HepG2 (cell line): ENCODE measurements at regions of chr2 and their contacts with region 1.

Region 1: GRCh38 chr2:28958689-28959088 is 22.4 kb upstream of the TOGARAM2 start:
- DNase-seq: peak; percentile 70
- ATAC-seq: peak; percentile 70
- H3K4me3 ChIP-seq: no peak overlapping the region
- H3K27ac ChIP-seq: no peak overlapping the region
- H3K4me1 ChIP-seq: peaks cover 18% of the 10 kb centered on the region
- H3K27me3 ChIP-seq: peaks cover 0 to 8% of the 10 kb centered on the region in 2 experiments; a peak in 2 of 5 replicates
- CTCF ChIP-seq: peak; percentile 83
- EP300 ChIP-seq: no peak
- POLR2A ChIP-seq: no peak
- RAD21 ChIP-seq: peak; percentile 89

Region 2: DNA sequence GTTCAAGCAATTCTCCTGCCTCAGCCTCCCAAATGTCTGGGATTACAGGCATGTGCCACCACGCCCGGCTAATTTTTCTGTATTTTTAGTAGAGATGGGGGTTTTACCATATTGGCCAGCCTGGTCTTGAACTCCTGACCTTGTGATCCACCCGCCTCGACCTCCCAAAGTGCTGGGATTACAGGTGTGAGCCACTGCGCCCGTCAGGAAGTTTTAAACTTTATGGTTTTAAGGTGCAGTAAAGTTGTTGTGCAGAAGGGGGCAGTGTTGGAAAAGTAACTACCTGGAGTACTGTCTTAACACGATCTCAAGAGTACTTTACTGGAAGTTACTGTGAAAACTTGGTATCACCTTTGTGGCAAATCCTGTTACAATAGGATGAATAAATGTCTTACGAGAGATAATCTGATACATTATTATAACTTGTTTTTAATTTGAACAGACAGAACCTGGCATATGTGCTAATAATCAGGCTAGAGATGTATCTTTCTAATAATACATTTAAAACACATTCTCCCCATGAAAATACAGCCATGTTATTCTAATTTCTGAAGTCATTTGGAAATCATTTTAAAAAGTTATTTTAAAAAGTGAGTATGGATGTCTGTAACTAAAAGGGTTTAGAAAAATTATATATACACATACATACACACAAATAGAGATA is 137.3 kb before region 1 on chr2:
- CTCF ChIA-PET with region 1: interaction called, 3 read pairs
- POLR2A ChIA-PET with region 1: no interaction called
- in situ Hi-C with region 1: no loop called
- intact Hi-C with region 1: loop called (anchors 1 kb)
- DNase-seq: peak; percentile 67
- ATAC-seq: peak; percentile 91
- H3K4me3 ChIP-seq: no peak overlapping the region
- H3K27ac ChIP-seq: no peak overlapping the region
- H3K4me1 ChIP-seq: no peaks in the 10 kb centered on the region; the same call in 1 of the 2 replicates
- H3K27me3 ChIP-seq: no peaks in the 10 kb centered on the region
- CTCF ChIP-seq: peak; percentile 90
- EP300 ChIP-seq: no peak
- POLR2A ChIP-seq: no peak
- RAD21 ChIP-seq: peak; percentile 62

Region 3: GRCh38 chr2:29108225-29108624 is 149.5 kb after region 1 on chr2:
- CTCF ChIA-PET with region 1: no interaction called
- POLR2A ChIA-PET with region 1: no interaction called
- in situ Hi-C with region 1: no loop called
- intact Hi-C with region 1: loop called (anchors 5 kb)
- DNase-seq: peak; percentile 84
- ATAC-seq: peak; percentile 97
- H3K4me3 ChIP-seq: peak overlapping the region in 2 of 3 experiments; percentile 5 to 11; a peak in 3 of 6 replicates
- H3K27ac ChIP-seq: no peak overlapping the region
- H3K4me1 ChIP-seq: peaks cover 30% of the 10 kb centered on the region
- H3K27me3 ChIP-seq: no peaks in the 10 kb centered on the region; a peak in 1 of 5 replicates
- CTCF ChIP-seq: no peak
- EP300 ChIP-seq: peak in 1 of 2 experiments; percentile 73; a peak in 1 of 4 replicates
- POLR2A ChIP-seq: no peak
- RAD21 ChIP-seq: no peak

Region 4: DNA sequence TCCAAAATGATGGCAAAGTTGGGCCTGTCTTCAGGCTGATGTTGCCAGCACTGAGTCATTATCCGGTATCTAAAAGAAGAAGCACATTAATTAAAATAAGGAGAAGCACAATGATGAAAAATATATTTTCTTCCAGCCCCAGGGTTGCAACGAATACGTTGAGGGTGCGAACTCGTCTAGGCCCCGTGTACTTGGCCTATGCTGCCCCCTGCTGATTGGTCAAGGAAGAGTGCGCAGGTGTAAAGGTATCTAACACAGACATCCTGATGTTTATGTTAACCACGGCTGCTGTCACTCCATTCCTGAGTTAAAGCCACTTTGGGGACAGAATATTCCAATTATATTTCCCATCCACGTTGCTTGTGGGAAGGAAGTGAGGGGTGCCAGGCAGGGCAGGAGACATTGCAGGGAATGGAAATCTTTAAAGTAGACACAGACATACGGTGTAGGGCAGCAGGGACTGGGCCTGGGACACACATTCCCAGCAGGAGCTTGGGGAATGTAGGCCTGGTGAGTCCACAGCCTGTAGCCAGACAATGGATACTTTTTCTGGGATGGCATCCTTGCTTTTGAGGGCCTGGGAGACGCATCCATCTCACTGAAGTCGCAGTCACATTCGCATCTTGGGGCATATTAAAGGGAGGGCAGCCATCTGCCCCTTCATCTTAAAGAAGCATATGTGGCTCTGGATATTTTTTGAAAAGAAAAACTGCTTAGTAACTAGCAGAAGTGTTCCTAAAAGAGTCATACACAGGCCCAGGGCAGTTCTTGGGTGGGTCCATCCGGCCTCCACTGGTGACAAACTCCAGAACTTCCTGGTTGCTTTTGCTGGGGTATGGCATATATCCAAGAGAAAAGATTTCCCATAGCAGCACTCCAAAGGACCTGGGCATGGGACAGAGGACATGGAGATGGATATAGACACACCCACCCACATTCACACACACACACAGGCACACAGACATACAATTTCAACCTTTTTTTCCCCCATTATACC is 238.4 kb after region 1 on chr2:
- CTCF ChIA-PET with region 1: interaction called, 111 read pairs
- POLR2A ChIA-PET with region 1: no interaction called
- in situ Hi-C with region 1: loop called (anchors 5 kb)
- intact Hi-C with region 1: loop called (anchors 1 kb)
- DNase-seq: peak; percentile 69
- ATAC-seq: peak; percentile 99
- H3K4me3 ChIP-seq: no peak overlapping the region
- H3K27ac ChIP-seq: no peak overlapping the region
- H3K4me1 ChIP-seq: no peaks in the 10 kb centered on the region
- H3K27me3 ChIP-seq: peaks cover 0 to 16% of the 10 kb centered on the region in 2 experiments; a peak in 3 of 5 replicates
- CTCF ChIP-seq: peak; percentile 94
- EP300 ChIP-seq: no peak
- POLR2A ChIP-seq: no peak
- RAD21 ChIP-seq: peak; percentile 93

Region 5: DNA sequence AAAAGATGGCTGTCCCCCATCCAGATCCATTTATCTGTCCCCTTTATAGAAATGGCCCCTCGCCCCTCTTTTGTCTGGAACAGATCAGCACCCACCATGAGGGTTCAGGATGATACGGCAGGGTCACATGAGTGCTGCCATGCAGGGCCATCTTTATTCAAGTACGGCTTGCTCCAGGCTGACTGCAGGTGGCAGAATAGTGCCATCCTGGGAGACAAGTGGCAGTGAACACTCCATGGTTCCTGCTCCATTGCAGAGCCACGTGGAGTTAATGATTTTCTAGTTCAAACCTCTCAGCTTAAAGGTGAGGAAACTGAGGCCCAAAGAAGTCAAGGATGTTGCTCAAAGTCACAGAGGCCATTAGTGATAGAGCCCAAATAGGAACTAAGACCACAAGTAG is 337.2 kb after region 1 on chr2:
- CTCF ChIA-PET with region 1: no interaction called
- POLR2A ChIA-PET with region 1: no interaction called
- in situ Hi-C with region 1: no loop called
- intact Hi-C with region 1: no loop called
- DNase-seq: no peak
- ATAC-seq: 0 out of 3 replicates have a peak, but pooled peaks have one; percentile 39
- H3K4me3 ChIP-seq: no peak overlapping the region
- H3K27ac ChIP-seq: no peak overlapping the region
- H3K4me1 ChIP-seq: no peaks in the 10 kb centered on the region
- H3K27me3 ChIP-seq: peaks cover 0 to 5% of the 10 kb centered on the region in 2 experiments; a peak in 1 of 5 replicates
- CTCF ChIP-seq: peak; percentile 41; the same call in 1 of the 2 replicates
- EP300 ChIP-seq: no peak
- POLR2A ChIP-seq: no peak
- RAD21 ChIP-seq: no peak

Region 6: GRCh38 chr2:29309090-29310029 is 350.7 kb after region 1 on chr2:
- CTCF ChIA-PET with region 1: no interaction called
- POLR2A ChIA-PET with region 1: no interaction called
- in situ Hi-C with region 1: no loop called
- intact Hi-C with region 1: loop called (anchors 2 kb)
- DNase-seq: peak; percentile 62
- ATAC-seq: peak; percentile 94
- H3K4me3 ChIP-seq: no peak overlapping the region
- H3K27ac ChIP-seq: no peak overlapping the region
- H3K4me1 ChIP-seq: no peaks in the 10 kb centered on the region
- H3K27me3 ChIP-seq: peaks cover 0 to 24% of the 10 kb centered on the region in 2 experiments; a peak in 2 of 5 replicates
- CTCF ChIP-seq: peak; percentile 71
- EP300 ChIP-seq: no peak
- POLR2A ChIP-seq: no peak
- RAD21 ChIP-seq: no peak

Region 7: DNA sequence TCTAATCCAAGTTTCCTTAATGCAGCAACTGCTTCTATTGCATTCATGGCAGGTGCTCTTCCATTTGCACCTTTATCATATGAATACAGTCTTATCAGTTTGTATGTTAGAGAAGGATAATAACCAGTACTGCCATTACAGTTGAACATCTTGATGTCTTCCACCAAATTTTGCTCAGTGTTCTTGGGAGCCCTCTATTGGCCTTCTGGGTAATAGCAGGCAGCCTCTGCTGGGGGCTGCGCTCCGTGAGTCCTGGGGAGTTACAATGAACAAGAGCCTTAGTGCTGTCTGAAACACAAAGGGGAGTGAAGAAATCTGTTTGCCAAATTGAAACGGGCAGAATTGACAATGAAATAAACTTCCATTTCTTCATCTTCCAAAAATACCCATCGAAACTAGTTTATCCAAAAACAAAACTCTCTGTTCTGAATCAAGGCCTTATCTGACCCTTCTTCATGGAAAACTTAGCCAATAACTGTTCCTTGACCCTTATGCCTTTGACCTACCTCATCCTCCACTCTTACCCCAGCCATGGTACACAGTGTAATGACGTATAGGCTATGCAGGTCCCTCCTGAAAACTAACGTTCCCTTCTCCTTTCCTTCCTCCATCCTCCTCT is 882.8 kb after region 1 on chr2:
- CTCF ChIA-PET with region 1: interaction called, 3 read pairs
- POLR2A ChIA-PET with region 1: no interaction called
- in situ Hi-C with region 1: no loop called
- intact Hi-C with region 1: loop called (anchors 10 kb)
- DNase-seq: peak; percentile 30
- ATAC-seq: peak; percentile 78
- H3K4me3 ChIP-seq: no peak overlapping the region
- H3K27ac ChIP-seq: no peak overlapping the region
- H3K4me1 ChIP-seq: no peaks in the 10 kb centered on the region
- H3K27me3 ChIP-seq: peaks cover 0 to 25% of the 10 kb centered on the region in 2 experiments; a peak in 2 of 5 replicates
- CTCF ChIP-seq: peak; percentile 73
- EP300 ChIP-seq: no peak
- POLR2A ChIP-seq: no peak
- RAD21 ChIP-seq: no peak; the same call in 1 of the 2 replicates

Region 8: DNA sequence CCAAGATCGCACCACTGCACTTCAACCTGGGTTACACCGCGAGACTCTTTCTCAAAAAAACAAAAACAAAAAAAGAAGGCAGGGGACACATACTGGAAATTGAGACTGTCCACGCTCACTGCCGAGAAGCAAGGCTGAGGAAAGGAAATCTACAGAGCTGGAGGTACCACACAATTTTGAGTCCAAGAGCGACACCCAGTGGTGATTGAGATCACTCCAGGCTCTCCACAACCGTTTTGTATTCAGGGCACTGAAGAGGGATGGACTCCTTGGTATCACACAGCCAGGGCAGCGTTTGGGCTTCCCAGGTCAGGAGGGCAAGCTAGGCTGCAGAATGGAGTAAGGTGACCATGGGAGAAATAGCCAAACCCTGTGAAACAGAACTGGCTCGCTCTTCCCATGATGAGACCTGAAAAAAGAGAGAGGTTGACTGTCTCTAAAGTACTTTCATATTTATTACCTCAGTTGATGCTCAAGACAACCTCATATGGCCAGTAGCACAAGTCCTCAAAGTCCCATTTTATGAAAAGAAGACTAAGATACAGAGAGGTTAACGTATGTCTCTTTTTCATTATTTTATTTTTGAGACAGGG is 1113.7 kb after region 1 on chr2:
- CTCF ChIA-PET with region 1: no interaction called
- POLR2A ChIA-PET with region 1: no interaction called
- in situ Hi-C with region 1: loop called (anchors 25 kb)
- intact Hi-C with region 1: no loop called
- DNase-seq: peak; percentile 70
- ATAC-seq: peak; percentile 99
- H3K4me3 ChIP-seq: no peak overlapping the region
- H3K27ac ChIP-seq: no peak overlapping the region
- H3K4me1 ChIP-seq: no peaks in the 10 kb centered on the region
- H3K27me3 ChIP-seq: peaks cover 0 to 18% of the 10 kb centered on the region in 2 experiments; a peak in 2 of 5 replicates
- CTCF ChIP-seq: peak; percentile 91
- EP300 ChIP-seq: no peak
- POLR2A ChIP-seq: no peak
- RAD21 ChIP-seq: no peak; the same call in 1 of the 2 replicates